PC-3 (cell line): ENCODE measurements at regions of chr5 and their contacts with region 1.

Region 1: DNA sequence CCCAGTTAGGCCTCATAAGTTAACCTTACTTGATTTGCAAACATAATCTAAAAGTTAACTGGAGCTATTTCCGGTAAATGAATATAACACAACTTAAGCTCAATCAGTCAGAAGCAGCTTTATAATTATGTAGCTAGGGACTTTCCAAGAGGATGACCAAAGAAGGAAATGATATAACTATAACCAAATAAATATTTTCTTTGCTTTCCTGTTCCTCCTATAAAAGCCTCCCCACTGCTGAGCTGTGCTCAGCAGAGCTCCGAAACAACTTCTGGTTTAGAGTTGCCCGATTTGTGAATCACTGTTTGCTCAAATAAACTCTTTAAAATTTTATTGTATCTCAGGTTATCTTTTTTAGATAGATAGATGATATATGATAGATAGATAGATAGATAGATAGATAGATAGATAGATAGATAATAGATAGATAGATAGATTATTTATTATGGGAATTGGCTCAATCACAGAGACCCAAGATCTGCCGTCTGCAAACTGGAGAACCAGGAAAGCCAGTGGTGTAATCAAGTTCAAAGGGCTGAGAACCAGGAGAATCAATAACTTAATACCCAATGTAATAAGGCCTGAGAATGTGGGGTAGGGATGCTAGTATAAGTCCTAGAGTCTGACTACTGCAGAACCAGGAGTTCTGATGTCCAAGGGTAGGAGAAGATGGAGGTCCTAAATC is 19.3 kb upstream of the TMEM161B start:
- DNase-seq: peak; percentile 64
- ATAC-seq: peak; percentile 82
- H3K4me3 ChIP-seq: no peak overlapping the region; the same call in 1 of the 2 replicates
- H3K27ac ChIP-seq: peak overlapping the region; percentile 77
- H3K4me1 ChIP-seq: peaks cover 33% of the 10 kb centered on the region
- H3K27me3 ChIP-seq: no peaks in the 10 kb centered on the region
- CTCF ChIP-seq: no peak

Region 2: GRCh38 chr5:88298425-88298824 is 10.4 kb after region 1 on chr5:
- CTCF ChIA-PET with region 1: no interaction called
- POLR2A ChIA-PET with region 1: no interaction called
- intact Hi-C with region 1: no loop called
- DNase-seq: peak; percentile 12
- ATAC-seq: no peak
- H3K4me3 ChIP-seq: no peak overlapping the region
- H3K27ac ChIP-seq: no peak overlapping the region
- H3K4me1 ChIP-seq: no peaks in the 10 kb centered on the region
- H3K27me3 ChIP-seq: no peaks in the 10 kb centered on the region
- CTCF ChIP-seq: no peak

Region 3: GRCh38 chr5:88452820-88453219 is 164.8 kb after region 1 on chr5:
- CTCF ChIA-PET with region 1: no interaction called
- POLR2A ChIA-PET with region 1: no interaction called
- intact Hi-C with region 1: no loop called
- DNase-seq: peak; percentile 34
- ATAC-seq: peak; percentile 51
- H3K4me3 ChIP-seq: no peak overlapping the region
- H3K27ac ChIP-seq: no peak overlapping the region
- H3K4me1 ChIP-seq: no peaks in the 10 kb centered on the region
- H3K27me3 ChIP-seq: no peaks in the 10 kb centered on the region
- CTCF ChIP-seq: no peak

Region 4: GRCh38 chr5:88515876-88516819 is 228.2 kb after region 1 on chr5:
- CTCF ChIA-PET with region 1: no interaction called
- POLR2A ChIA-PET with region 1: interaction called, 3 read pairs
- intact Hi-C with region 1: loop called (anchors 2 kb)
- DNase-seq: peak; percentile 86
- ATAC-seq: peak; percentile 96
- H3K4me3 ChIP-seq: no peak overlapping the region
- H3K27ac ChIP-seq: peak overlapping the region; percentile 47
- H3K4me1 ChIP-seq: peaks cover 18% of the 10 kb centered on the region
- H3K27me3 ChIP-seq: no peaks in the 10 kb centered on the region
- CTCF ChIP-seq: no peak

Region 5: GRCh38 chr5:88583471-88583870 is 295.5 kb after region 1 on chr5:
- CTCF ChIA-PET with region 1: no interaction called
- POLR2A ChIA-PET with region 1: no interaction called
- intact Hi-C with region 1: no loop called
- DNase-seq: no peak
- ATAC-seq: no peak
- H3K4me3 ChIP-seq: no peak overlapping the region
- H3K27ac ChIP-seq: no peak overlapping the region
- H3K4me1 ChIP-seq: no peaks in the 10 kb centered on the region
- H3K27me3 ChIP-seq: no peaks in the 10 kb centered on the region
- CTCF ChIP-seq: no peak

Region 6: GRCh38 chr5:88666761-88667495 is 378.9 kb after region 1 on chr5:
- CTCF ChIA-PET with region 1: no interaction called
- POLR2A ChIA-PET with region 1: no interaction called
- intact Hi-C with region 1: loop called (anchors 5 kb)
- DNase-seq: peak; percentile 11
- ATAC-seq: peak; percentile 74
- H3K4me3 ChIP-seq: peak overlapping the region; percentile 74
- H3K27ac ChIP-seq: no peak overlapping the region
- H3K4me1 ChIP-seq: 0 out of 2 replicates have a peak, but pooled peaks cover under 1% of the 10 kb centered on the region
- H3K27me3 ChIP-seq: no peaks in the 10 kb centered on the region
- CTCF ChIP-seq: no peak

Region 7: GRCh38 chr5:88707216-88707965 is 419.4 kb after region 1 on chr5:
- CTCF ChIA-PET with region 1: no interaction called
- POLR2A ChIA-PET with region 1: no interaction called
- intact Hi-C with region 1: no loop called
- DNase-seq: peak; percentile 73
- ATAC-seq: peak; percentile 77
- H3K4me3 ChIP-seq: no peak overlapping the region
- H3K27ac ChIP-seq: no peak overlapping the region
- H3K4me1 ChIP-seq: peaks cover 10% of the 10 kb centered on the region; the same call in 1 of the 2 replicates
- H3K27me3 ChIP-seq: no peaks in the 10 kb centered on the region
- CTCF ChIP-seq: no peak